ENCODE measurements at regions of chr1 and their contacts with region 1.

Region 1: GRCh38 chr1:8629241-8630091 is 188.0 kb downstream of the RERE start:
- DNase-seq: no peak
- H3K4me3 Mint-ChIP-seq: no peak overlapping the region
- H3K27ac Mint-ChIP-seq: peak overlapping the region; percentile 50
- H3K4me1 Mint-ChIP-seq: peaks cover 60% of the 10 kb centered on the region
- H3K27me3 Mint-ChIP-seq: no peaks in the 10 kb centered on the region

Region 2: GRCh38 chr1:8431019-8431418 is 198.4 kb before region 1 on chr1:
- intact Hi-C with region 1: no loop called
- DNase-seq: no peak
- H3K4me3 Mint-ChIP-seq: peak overlapping the region; percentile 50
- H3K27ac Mint-ChIP-seq: peak overlapping the region; percentile 72
- H3K4me1 Mint-ChIP-seq: peaks cover 54% of the 10 kb centered on the region
- H3K27me3 Mint-ChIP-seq: no peaks in the 10 kb centered on the region

Region 3: DNA sequence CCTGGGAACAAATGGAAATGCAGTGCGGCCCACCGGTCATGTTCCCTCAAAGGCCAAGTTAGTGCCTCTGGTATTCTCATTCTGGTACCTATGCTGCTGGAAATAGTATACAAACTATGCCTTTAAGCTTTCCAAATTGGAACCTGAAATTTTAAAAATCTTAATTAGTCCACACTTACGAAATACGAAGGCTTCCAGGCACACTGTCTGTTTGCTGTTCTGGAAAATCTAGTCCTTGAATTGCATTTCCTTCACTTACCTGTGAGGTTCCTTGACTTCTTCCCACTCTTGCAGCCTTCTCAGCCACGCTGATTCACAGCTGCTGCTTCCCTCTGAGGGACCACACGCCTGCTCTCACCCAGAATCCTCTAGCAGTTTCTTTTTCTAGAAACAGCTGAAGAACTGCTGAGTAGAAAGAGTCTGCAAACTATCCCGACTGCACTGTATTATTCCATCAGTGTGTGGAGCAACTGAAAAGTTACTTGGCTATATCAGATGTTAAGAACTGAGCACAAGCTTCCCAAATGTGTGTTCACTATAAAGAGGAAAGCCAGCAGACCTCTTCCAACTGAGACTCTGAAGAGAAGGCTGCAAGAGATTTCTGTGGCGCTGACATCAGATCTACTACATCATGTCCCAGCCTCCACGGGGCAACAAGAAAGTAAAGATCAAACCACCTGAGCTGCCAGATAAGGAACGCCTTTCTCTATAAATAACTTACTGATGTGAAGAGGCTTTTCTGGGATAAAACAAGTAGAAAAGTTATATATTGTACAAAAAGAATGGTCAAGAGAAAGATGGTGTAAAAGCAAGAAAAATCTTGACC is 38.7 kb before region 1 on chr1:
- intact Hi-C with region 1: loop called (anchors 5 kb)
- DNase-seq: no peak
- H3K4me3 Mint-ChIP-seq: no peak overlapping the region
- H3K27ac Mint-ChIP-seq: peak overlapping the region; percentile 59
- H3K4me1 Mint-ChIP-seq: peaks cover 45% of the 10 kb centered on the region
- H3K27me3 Mint-ChIP-seq: no peaks in the 10 kb centered on the region

Region 4: GRCh38 chr1:8848663-8849386 is 219.4 kb after region 1 on chr1:
- intact Hi-C with region 1: no loop called
- DNase-seq: peak; percentile 56
- H3K4me3 Mint-ChIP-seq: no peak overlapping the region
- H3K27ac Mint-ChIP-seq: no peak overlapping the region
- H3K4me1 Mint-ChIP-seq: no peaks in the 10 kb centered on the region
- H3K27me3 Mint-ChIP-seq: no peaks in the 10 kb centered on the region

Measured in activated T-helper 2 cell treated with anti-CD3 and anti-CD28 coated beads, Interferon-gamma antibody, Interleukin-2, Interleukin-4, amounts not matched to agents 10 μg/mL and 5 μg/mL and 100 μg/mL, durations not matched to agents 14 hours and 24 hours and 36 hours (primary cell).